SK-N-SH (cell line): ENCODE measurements at regions of chr1 and their contacts with region 1.

Region 1: GRCh38 chr1:156045076-156045475 is 8.5 kb downstream of the UBQLN4 start:
- DNase-seq: no peak
- H3K4me3 ChIP-seq: no peak overlapping the region
- H3K27ac ChIP-seq: no peak overlapping the region
- H3K4me1 ChIP-seq: no peaks in the 10 kb centered on the region
- H3K27me3 ChIP-seq: no peaks in the 10 kb centered on the region
- CTCF ChIP-seq: no peak
- EP300 ChIP-seq: no peak
- RAD21 ChIP-seq: no peak

Region 2: DNA sequence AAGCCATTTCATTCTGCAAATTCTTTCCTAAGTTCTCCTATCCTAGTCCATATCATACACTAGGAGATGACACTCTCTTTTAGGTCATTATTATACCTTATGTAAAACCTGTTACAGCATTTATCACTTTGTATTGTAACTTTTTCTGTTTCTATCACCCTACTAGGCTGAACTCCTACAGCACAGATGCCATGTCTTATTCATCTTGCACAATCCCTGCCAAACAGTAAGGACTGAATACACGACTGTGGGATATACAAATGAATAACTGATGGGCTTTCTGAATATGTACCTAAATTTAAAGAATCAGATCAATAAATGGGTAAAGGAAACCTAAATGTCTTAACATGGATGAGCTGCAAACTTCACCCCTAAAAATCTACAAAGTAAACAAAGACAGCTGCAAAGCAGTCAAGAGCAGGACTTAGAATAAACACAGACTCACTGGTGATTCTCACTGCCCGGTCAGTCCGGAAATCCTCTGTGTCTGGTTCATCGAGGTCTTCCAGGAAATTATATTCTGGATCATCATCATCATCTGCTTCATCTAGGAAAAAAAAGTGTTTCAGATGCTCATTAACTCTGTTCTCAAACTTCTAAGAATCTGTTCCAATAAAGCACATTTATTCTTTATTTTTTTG is 250.4 kb before region 1 on chr1:
- CTCF ChIA-PET with region 1: no interaction called
- POLR2A ChIA-PET with region 1: no interaction called
- DNase-seq: no peak
- H3K4me3 ChIP-seq: no peak overlapping the region
- H3K27ac ChIP-seq: no peak overlapping the region
- H3K4me1 ChIP-seq: no peaks in the 10 kb centered on the region
- H3K27me3 ChIP-seq: no peaks in the 10 kb centered on the region
- CTCF ChIP-seq: no peak
- EP300 ChIP-seq: no peak
- RAD21 ChIP-seq: no peak

Region 3: DNA sequence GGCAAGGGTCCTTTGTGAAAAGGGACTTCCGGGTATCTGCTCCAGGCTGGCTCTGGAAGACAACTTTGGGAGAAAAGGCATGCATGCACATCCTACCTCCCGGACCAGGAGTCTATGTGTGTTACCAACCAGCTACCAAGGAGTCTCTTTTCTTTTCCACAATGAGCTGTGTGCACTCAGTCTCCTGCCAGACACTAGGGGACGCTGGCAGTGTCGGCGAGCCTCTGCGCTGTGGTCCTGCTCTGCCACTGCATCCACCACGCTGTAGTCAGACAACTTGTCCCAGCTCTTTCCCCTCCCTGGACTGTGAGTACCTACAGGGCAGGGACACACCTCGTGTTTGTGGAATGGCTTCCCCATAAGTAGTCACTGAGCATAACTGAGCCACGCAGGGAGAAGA is 19.2 kb before region 1 on chr1:
- CTCF ChIA-PET with region 1: interaction called, 11 read pairs
- POLR2A ChIA-PET with region 1: interaction called, 6 read pairs
- DNase-seq: peak; percentile 85
- H3K4me3 ChIP-seq: peak overlapping the region in 1 of 2 experiments; percentile 33; a peak in 1 of 4 replicates
- H3K27ac ChIP-seq: no peak overlapping the region
- H3K4me1 ChIP-seq: peaks cover 0 to 3% of the 10 kb centered on the region in 2 experiments; a peak in 2 of 4 replicates
- H3K27me3 ChIP-seq: no peaks in the 10 kb centered on the region
- CTCF ChIP-seq: peak; percentile 72
- EP300 ChIP-seq: no peak
- RAD21 ChIP-seq: peak; percentile 65